GM12878 (cell line): ENCODE measurements at regions of chr18 and their contacts with region 1.

Region 1: DNA sequence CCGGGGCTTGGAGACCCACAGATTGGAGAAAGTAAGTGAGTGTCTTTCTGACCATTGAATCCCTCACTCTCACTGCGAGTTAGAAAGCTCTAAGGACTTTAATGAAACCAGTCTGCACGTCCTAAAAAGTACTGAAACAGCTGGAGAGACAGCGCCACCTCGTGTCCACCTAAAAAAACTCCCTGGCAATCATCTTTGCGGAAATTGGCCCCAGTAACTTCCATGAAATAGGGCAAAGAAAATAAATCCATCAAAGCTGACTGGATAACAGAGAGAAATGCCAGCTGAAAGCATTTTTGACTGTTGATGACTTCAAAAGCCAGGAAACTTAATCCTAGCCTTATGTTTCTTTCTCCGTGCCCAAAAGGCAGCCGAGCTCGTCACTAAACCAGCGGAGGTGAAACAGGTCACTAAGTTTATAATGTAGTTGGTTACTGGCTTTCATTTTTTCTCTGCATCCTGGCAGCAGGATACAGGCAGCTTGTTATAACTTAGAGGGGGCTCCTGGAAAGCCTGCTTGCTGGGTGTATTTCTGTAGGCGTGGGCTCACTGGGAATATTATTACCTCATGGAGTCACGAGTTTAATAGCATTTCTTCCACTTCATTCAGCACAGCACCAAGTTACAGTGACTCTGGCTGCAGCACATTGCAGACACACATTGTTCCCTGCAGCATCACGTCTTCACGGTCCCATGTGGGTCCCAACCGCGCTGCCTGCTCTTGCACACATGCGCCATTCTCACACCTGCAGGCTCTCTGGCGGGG is 266.5 kb downstream of the HRH4 start:
- DNase-seq: no peak
- ATAC-seq: peak; percentile 64
- H3K4me3 ChIP-seq: no peak overlapping the region
- H3K27ac ChIP-seq: no peak overlapping the region
- H3K4me1 ChIP-seq: no peaks in the 10 kb centered on the region
- H3K27me3 ChIP-seq: no peaks in the 10 kb centered on the region; a peak in 1 of 4 replicates
- CTCF ChIP-seq: peak; percentile 74 to 79 (median 78)
- EP300 ChIP-seq: no peak
- POLR2A ChIP-seq: no peak
- RAD21 ChIP-seq: peak; percentile 84

Region 2: GRCh38 chr18:24362758-24363157 is 364.2 kb before region 1 on chr18:
- CTCF ChIA-PET with region 1: interaction called, 11 read pairs
- POLR2A ChIA-PET with region 1: no interaction called
- RAD21 ChIA-PET with region 1: interaction called, 5 read pairs
- SMC1A ChIA-PET with region 1: interaction called, 4 read pairs
- in situ Hi-C with region 1: loop called (anchors 5 kb)
- intact Hi-C with region 1: loop called (anchors 1 kb)
- DNase-seq: no peak
- ATAC-seq: no peak
- H3K4me3 ChIP-seq: no peak overlapping the region
- H3K27ac ChIP-seq: no peak overlapping the region
- H3K4me1 ChIP-seq: no peaks in the 10 kb centered on the region
- H3K27me3 ChIP-seq: 0 out of 4 replicates have a peak, but pooled peaks cover 0 to 2% of the 10 kb centered on the region in 2 experiments
- CTCF ChIP-seq: no peak
- EP300 ChIP-seq: no peak
- POLR2A ChIP-seq: no peak
- RAD21 ChIP-seq: no peak

Region 3: DNA sequence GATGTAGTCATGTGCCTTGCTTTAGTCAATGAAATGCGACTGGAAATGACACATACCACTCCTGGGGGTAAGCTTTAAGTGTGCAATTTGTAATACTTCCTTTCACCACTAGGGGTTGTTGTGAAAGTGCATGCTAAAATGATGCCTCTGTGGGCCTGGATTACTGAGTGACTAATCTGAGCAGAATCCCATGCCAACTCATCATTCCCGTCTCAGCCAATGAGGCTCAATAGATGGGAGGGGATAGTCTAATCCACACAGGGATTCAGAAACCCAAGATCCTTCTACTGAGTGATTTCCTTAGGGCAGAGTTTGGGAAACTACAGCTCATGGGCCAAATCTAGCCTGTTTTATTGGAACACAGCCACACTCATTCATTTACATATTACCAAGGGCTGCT is 212.5 kb before region 1 on chr18:
- CTCF ChIA-PET with region 1: interaction called, 11 read pairs
- POLR2A ChIA-PET with region 1: no interaction called
- RAD21 ChIA-PET with region 1: no interaction called
- SMC1A ChIA-PET with region 1: no interaction called
- in situ Hi-C with region 1: no loop called
- intact Hi-C with region 1: no loop called
- DNase-seq: no peak
- ATAC-seq: peak; percentile 86
- H3K4me3 ChIP-seq: no peak overlapping the region
- H3K27ac ChIP-seq: no peak overlapping the region
- H3K4me1 ChIP-seq: no peaks in the 10 kb centered on the region
- H3K27me3 ChIP-seq: 0 out of 4 replicates have a peak, but pooled peaks cover 0 to 2% of the 10 kb centered on the region in 2 experiments
- CTCF ChIP-seq: peak; percentile 48 to 67 (median 64)
- EP300 ChIP-seq: no peak
- POLR2A ChIP-seq: no peak
- RAD21 ChIP-seq: peak; percentile 12; the same call in 1 of the 2 replicates

Region 4: DNA sequence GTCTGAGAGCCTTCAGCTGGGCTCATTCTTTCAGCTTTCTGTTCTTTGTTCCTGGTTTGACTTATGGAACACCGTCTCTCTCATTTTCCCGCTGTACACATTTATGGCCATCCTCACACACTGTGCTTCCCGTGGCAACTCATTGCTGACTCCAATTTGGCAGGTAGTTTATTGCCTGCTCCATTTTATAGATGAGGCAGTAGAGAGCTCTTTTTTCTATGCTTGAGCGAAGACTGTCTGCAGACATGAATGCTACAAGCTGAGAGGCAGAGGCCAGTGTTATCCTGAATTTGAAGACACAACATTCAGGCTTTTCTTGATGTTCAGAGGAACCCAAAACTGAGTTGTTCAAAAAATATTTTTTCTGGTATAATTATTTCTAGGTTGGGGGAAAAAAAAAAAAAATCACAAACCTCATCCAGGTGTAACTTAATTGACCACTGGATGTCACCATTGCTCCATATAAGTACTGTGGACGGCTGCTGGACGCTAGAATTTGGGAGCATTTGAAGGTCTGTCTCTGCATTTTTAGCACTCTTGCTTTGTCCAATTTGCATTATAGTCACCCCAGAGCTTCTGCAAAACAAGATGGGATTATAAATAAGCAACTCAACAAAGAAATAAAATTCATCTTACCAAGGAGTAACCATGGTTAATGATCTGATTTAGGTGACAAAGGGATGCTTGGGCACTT is 183.0 kb before region 1 on chr18:
- CTCF ChIA-PET with region 1: interaction called, 6 read pairs
- POLR2A ChIA-PET with region 1: no interaction called
- RAD21 ChIA-PET with region 1: no interaction called
- SMC1A ChIA-PET with region 1: interaction called, 3 read pairs
- in situ Hi-C with region 1: no loop called
- intact Hi-C with region 1: loop called (anchors 1 kb)
- DNase-seq: no peak
- ATAC-seq: no peak
- H3K4me3 ChIP-seq: no peak overlapping the region
- H3K27ac ChIP-seq: no peak overlapping the region
- H3K4me1 ChIP-seq: no peaks in the 10 kb centered on the region
- H3K27me3 ChIP-seq: no peaks in the 10 kb centered on the region; a peak in 3 of 4 replicates
- CTCF ChIP-seq: peak in 2 of 3 experiments; percentile 14 to 38; a peak in 2 of 6 replicates
- EP300 ChIP-seq: no peak
- POLR2A ChIP-seq: no peak
- RAD21 ChIP-seq: peak; percentile 55

Region 5: GRCh38 chr18:24600076-24600654 is 126.7 kb before region 1 on chr18:
- CTCF ChIA-PET with region 1: interaction called, 20 read pairs
- POLR2A ChIA-PET with region 1: no interaction called
- RAD21 ChIA-PET with region 1: no interaction called
- SMC1A ChIA-PET with region 1: interaction called, 3 read pairs
- in situ Hi-C with region 1: no loop called
- intact Hi-C with region 1: loop called (anchors 1 kb)
- DNase-seq: no peak
- ATAC-seq: no peak
- H3K4me3 ChIP-seq: no peak overlapping the region
- H3K27ac ChIP-seq: no peak overlapping the region
- H3K4me1 ChIP-seq: no peaks in the 10 kb centered on the region
- H3K27me3 ChIP-seq: no peaks in the 10 kb centered on the region
- CTCF ChIP-seq: peak; percentile 22 to 48 (median 45); a peak in 5 of 6 replicates
- EP300 ChIP-seq: no peak
- POLR2A ChIP-seq: no peak
- RAD21 ChIP-seq: peak; percentile 45

Region 6: DNA sequence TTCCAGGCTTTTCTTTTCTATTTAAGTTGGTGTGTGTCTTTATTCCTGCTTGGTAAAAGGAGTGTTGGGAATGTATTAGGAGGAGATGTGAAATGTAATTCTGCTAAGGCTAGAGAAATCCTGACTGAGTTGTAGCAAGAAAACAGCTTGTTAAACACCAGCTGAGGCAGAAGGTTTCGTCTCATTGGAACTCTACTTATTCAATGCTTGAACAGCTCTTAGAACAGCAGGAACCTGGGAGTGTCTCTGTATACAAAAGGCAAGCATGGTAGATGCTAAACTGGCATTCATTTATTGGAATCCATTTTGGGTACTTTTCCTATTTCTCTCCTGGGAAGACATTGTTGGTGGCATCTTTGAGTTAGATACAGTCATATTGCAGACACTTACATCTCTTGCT is 14.4 kb after region 1 on chr18:
- CTCF ChIA-PET with region 1: interaction called, 11 read pairs
- POLR2A ChIA-PET with region 1: no interaction called
- RAD21 ChIA-PET with region 1: no interaction called
- SMC1A ChIA-PET with region 1: no interaction called
- in situ Hi-C with region 1: no loop called
- intact Hi-C with region 1: no loop called
- DNase-seq: no peak
- ATAC-seq: no peak
- H3K4me3 ChIP-seq: no peak overlapping the region
- H3K27ac ChIP-seq: no peak overlapping the region
- H3K4me1 ChIP-seq: no peaks in the 10 kb centered on the region
- H3K27me3 ChIP-seq: no peaks in the 10 kb centered on the region; a peak in 1 of 4 replicates
- CTCF ChIP-seq: no peak
- EP300 ChIP-seq: no peak
- POLR2A ChIP-seq: no peak
- RAD21 ChIP-seq: no peak

Region 7: DNA sequence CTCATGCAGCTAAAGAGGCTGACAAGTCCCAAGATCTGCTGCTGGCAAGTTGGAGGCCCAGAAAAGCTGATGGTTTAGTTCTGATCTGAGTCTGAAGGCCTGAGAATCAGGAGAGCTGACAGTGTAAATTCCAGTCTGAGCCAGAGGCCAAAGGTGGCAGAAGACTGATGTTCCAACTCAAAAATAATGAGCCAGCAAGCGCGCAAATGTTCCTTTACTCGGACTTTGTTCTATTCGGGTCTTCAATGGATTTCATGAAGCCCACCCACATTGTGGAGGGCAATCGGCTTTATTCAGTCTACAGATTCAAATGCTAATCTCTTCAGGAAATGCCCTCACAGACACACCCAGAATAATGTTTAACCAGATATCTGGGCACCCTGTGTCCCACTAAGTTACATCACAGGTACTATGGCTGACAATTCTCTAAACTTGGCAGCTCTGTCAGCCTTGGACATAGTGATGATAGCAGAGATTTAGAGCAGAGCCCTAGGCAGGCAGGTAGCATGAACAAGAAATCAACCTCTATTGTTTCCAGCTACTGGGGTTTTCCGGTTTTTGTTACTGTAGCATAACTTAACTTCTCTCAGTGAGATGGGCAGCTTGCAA is 52.0 kb after region 1 on chr18:
- CTCF ChIA-PET with region 1: no interaction called
- POLR2A ChIA-PET with region 1: no interaction called
- RAD21 ChIA-PET with region 1: no interaction called
- SMC1A ChIA-PET with region 1: no interaction called
- in situ Hi-C with region 1: no loop called
- intact Hi-C with region 1: no loop called
- DNase-seq: no peak
- ATAC-seq: no peak
- H3K4me3 ChIP-seq: no peak overlapping the region
- H3K27ac ChIP-seq: no peak overlapping the region
- H3K4me1 ChIP-seq: no peaks in the 10 kb centered on the region
- H3K27me3 ChIP-seq: no peaks in the 10 kb centered on the region; a peak in 3 of 4 replicates
- CTCF ChIP-seq: no peak
- EP300 ChIP-seq: no peak
- POLR2A ChIP-seq: no peak
- RAD21 ChIP-seq: no peak

Region 8: GRCh38 chr18:24799176-24799575 is 72.3 kb after region 1 on chr18:
- CTCF ChIA-PET with region 1: no interaction called
- POLR2A ChIA-PET with region 1: no interaction called
- RAD21 ChIA-PET with region 1: no interaction called
- SMC1A ChIA-PET with region 1: no interaction called
- in situ Hi-C with region 1: no loop called
- intact Hi-C with region 1: no loop called
- DNase-seq: no peak
- ATAC-seq: no peak
- H3K4me3 ChIP-seq: no peak overlapping the region
- H3K27ac ChIP-seq: no peak overlapping the region
- H3K4me1 ChIP-seq: no peaks in the 10 kb centered on the region
- H3K27me3 ChIP-seq: no peaks in the 10 kb centered on the region
- CTCF ChIP-seq: no peak
- EP300 ChIP-seq: no peak
- POLR2A ChIP-seq: no peak
- RAD21 ChIP-seq: no peak